HEK293 (cell line): ENCODE measurements at regions of chr1 and their contacts with region 1.

Region 1: GRCh38 chr1:44792783-44793714 is 5.1 kb upstream of the BEST4 start:
- H3K4me3 ChIP-seq: no peak overlapping the region
- H3K27ac ChIP-seq: no peak overlapping the region
- H3K4me1 ChIP-seq: no peaks in the 10 kb centered on the region
- CTCF ChIP-seq: no peak

Region 2: GRCh38 chr1:44780583-44781121 is 12.4 kb before region 1 on chr1:
- CTCF ChIA-PET with region 1: interaction called, 11 read pairs
- POLR2A ChIA-PET with region 1: interaction called, 41 read pairs
- H3K4me3 ChIP-seq: no peak overlapping the region
- H3K27ac ChIP-seq: no peak overlapping the region
- H3K4me1 ChIP-seq: 0 out of 2 replicates have a peak, but pooled peaks cover under 1% of the 10 kb centered on the region
- CTCF ChIP-seq: no peak

Region 3: DNA sequence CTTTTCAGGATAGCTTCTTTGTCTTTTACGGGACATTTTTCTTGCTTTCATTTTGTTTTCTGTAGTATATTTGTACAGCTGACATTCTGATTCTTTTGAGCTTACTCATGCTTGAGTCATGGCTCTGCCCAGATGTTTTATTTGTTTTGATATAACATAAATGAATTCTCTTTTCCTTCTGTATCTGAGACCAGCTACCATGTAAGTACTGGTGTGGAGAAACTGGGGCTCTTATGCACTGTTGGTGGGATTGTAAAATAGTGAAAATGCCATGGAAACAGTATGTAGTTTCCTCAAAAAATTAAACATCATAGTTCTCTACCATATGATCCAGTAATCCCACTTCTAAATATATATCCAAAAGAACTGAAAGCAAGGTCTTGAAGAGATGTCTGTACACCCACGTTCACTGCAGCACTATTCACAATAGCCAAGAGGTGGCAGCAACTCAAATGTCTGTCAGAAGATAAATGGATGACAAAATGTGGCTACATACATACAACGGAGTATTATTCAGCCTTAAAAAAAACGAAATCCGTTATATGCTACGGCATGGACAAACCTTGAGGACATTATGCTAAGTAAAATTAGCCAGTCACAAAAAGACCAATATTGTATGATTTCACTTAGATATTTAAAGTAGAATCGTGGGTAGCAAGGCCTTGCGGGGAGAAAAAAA is 131.9 kb after region 1 on chr1:
- CTCF ChIA-PET with region 1: no interaction called
- POLR2A ChIA-PET with region 1: no interaction called
- H3K4me3 ChIP-seq: no peak overlapping the region
- H3K27ac ChIP-seq: no peak overlapping the region
- H3K4me1 ChIP-seq: no peaks in the 10 kb centered on the region
- CTCF ChIP-seq: no peak